Mammary epithelial cell (primary cell): ENCODE measurements at regions of chr7 and their contacts with region 1.

Region 1: DNA sequence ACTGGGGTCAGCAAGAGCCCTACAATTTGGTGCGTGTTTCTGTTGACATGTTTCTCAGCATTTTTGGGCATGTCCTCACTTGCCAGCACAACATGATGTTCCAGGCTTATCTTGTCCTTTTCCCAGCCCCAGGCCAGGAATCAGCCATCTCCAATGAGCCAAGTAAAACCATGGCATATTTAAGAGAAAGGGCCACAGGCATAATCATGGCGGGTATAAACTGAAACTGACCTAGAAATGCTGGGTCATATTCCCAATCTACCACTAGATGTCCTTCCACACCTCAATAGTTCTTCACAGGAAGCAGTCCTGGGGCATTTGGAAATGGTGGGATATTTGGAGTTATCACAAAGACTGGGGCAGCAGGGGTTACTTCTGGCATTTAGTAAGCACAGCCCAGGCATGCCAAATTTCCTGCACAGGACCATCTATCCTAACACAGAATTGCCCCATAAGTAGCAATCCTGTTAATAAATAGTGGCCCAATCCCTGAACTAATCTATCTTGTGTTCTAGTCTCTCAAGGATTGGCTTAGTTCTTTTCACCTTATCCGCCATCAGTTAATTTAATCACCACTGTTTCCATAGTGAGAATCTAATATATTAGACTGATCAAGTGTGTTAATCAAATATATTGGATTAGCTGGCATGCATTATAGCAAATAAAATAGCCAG is 101.6 kb downstream of the NPSR1 start:
- DNase-seq: peak; percentile 5
- H3K4me3 ChIP-seq: no peak overlapping the region
- H3K27ac ChIP-seq: no peak overlapping the region
- H3K4me1 ChIP-seq: no peaks in the 10 kb centered on the region
- H3K27me3 ChIP-seq: no peaks in the 10 kb centered on the region
- CTCF ChIP-seq: peak; percentile 63 to 64

Region 2: GRCh38 chr7:34823640-34824258 is 64.2 kb after region 1 on chr7:
- CTCF ChIA-PET with region 1: no interaction called
- dilution Hi-C with region 1: no loop called
- in situ Hi-C with region 1: no loop called
- intact Hi-C with region 1: no loop called
- DNase-seq: peak; percentile 25
- H3K4me3 ChIP-seq: no peak overlapping the region
- H3K27ac ChIP-seq: no peak overlapping the region
- H3K4me1 ChIP-seq: no peaks in the 10 kb centered on the region
- H3K27me3 ChIP-seq: no peaks in the 10 kb centered on the region
- CTCF ChIP-seq: peak; percentile 85 to 91

Region 3: GRCh38 chr7:34928049-34928448 is 168.5 kb after region 1 on chr7:
- CTCF ChIA-PET with region 1: no interaction called
- dilution Hi-C with region 1: no loop called
- in situ Hi-C with region 1: no loop called
- intact Hi-C with region 1: loop called (anchors 5 kb)
- DNase-seq: peak; percentile 9
- H3K4me3 ChIP-seq: no peak overlapping the region
- H3K27ac ChIP-seq: no peak overlapping the region
- H3K4me1 ChIP-seq: no peaks in the 10 kb centered on the region
- H3K27me3 ChIP-seq: no peaks in the 10 kb centered on the region
- CTCF ChIP-seq: peak; percentile 46 to 64